Naive thymus-derived CD4-positive, alpha-beta T cell (primary cell): ENCODE measurements at regions of chr12 and their contacts with region 1.

Region 1: GRCh38 chr12:7188562-7189397 is 706 bp upstream of the PEX5 start:
- DNase-seq: peak; percentile 34 to 64 (median 58)
- ATAC-seq: peak; percentile 40
- H3K4me3 ChIP-seq: peak overlapping the region; percentile 89
- H3K4me3 Mint-ChIP-seq: peak overlapping the region; percentile 92 to 99 (median 97)
- H3K27ac ChIP-seq: peak overlapping the region; percentile 92
- H3K27ac Mint-ChIP-seq: peak overlapping the region; percentile 93 to 99 (median 98)
- H3K4me1 ChIP-seq: peaks cover 10 to 28% of the 10 kb centered on the region in 2 donors
- H3K4me1 Mint-ChIP-seq: peaks cover 18 to 48% (median 40%) of the 10 kb centered on the region in 7 donors
- H3K27me3 ChIP-seq: no peaks in the 10 kb centered on the region
- H3K27me3 Mint-ChIP-seq: no peaks in the 10 kb centered on the region

Region 2: GRCh38 chr12:6904280-6905278 is 284.2 kb before region 1 on chr12 and contains the start of gene LRRC23:
- CTCF ChIA-PET with region 1: no interaction called
- POLR2A ChIA-PET with region 1: no interaction called
- intact Hi-C with region 1: loop called in 1 of 2 experiments (anchors 1 kb)
- DNase-seq: peak; percentile 89 to 98 (median 95)
- ATAC-seq: peak; percentile 98
- H3K4me3 ChIP-seq: peak within 1 kb of the TSS; percentile 75
- H3K4me3 Mint-ChIP-seq: peak within 1 kb of the TSS in 1 of 10 donors; percentile 8
- H3K27ac ChIP-seq: peak within 1 kb of the TSS; percentile 93
- H3K27ac Mint-ChIP-seq: peak within 1 kb of the TSS in 1 of 9 donors; percentile 78
- H3K4me1 ChIP-seq: peaks cover 14 to 17% of the 10 kb centered on the region in 2 donors
- H3K4me1 Mint-ChIP-seq: peaks cover 0 to 10% (median 3%) of the 10 kb centered on the region in 7 donors
- H3K27me3 ChIP-seq: no peaks in the 10 kb centered on the region
- H3K27me3 Mint-ChIP-seq: no peaks in the 10 kb centered on the region
- total RNA-seq, gene LRRC23: 6.6 to 12.1 (median 7.3) TPM

Region 3: GRCh38 chr12:7018350-7019042 is 170.3 kb before region 1 on chr12 and contains the start of gene LPCAT3:
- CTCF ChIA-PET with region 1: no interaction called
- POLR2A ChIA-PET with region 1: no interaction called
- intact Hi-C with region 1: loop called (anchors 1 kb)
- DNase-seq: peak; percentile 93 to 99 (median 98)
- ATAC-seq: peak; percentile 97
- H3K4me3 ChIP-seq: peak within 1 kb of the TSS; percentile 95
- H3K4me3 Mint-ChIP-seq: peak within 1 kb of the TSS; percentile 84 to 100 (median 94)
- H3K27ac ChIP-seq: peak within 1 kb of the TSS; percentile 89
- H3K27ac Mint-ChIP-seq: peak within 1 kb of the TSS; percentile 75 to 96 (median 93)
- H3K4me1 ChIP-seq: peaks cover 11 to 12% of the 10 kb centered on the region in 2 donors
- H3K4me1 Mint-ChIP-seq: peaks cover 25 to 46% (median 41%) of the 10 kb centered on the region in 7 donors
- H3K27me3 ChIP-seq: no peaks in the 10 kb centered on the region
- H3K27me3 Mint-ChIP-seq: no peaks in the 10 kb centered on the region
- total RNA-seq, gene LPCAT3: 16.7 to 37.9 (median 27.1) TPM

Region 4: DNA sequence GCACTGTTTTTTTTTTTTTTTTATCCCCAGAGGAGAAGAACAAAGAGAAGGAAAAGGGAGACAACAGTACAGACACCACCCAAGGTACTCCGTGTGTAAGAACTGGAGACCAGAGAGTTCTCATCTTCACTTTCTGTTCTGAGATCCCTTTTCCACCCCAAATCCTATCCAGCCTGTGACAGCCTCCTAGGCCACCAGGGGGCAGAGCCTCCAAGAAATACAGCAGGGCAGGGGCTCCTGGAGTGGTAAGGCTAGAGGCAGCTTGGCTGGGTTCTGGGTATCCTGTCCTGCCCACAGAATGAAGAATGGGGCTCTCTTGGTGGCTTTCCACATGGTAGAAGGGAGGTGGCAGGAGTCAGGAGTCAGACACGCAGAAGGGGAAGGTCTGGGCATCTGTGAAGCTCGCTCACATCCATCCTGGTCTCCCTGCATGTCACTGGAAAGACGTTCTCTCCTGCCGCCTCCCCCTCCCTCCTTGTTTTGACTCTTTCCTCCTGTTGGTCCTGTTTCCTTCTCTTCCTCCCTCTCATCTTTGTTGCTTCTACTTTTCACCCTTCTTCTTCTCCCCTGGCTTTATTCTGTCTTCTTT is 46.6 kb before region 1 on chr12:
- CTCF ChIA-PET with region 1: interaction called, 5 read pairs
- POLR2A ChIA-PET with region 1: interaction called, 3 read pairs
- intact Hi-C with region 1: loop called (anchors 1 kb)
- DNase-seq: peak in 8 of 9 donors; percentile 33 to 60 (median 56)
- ATAC-seq: peak; percentile 83
- H3K4me3 ChIP-seq: no peak overlapping the region
- H3K4me3 Mint-ChIP-seq: no peak overlapping the region
- H3K27ac ChIP-seq: no peak overlapping the region
- H3K27ac Mint-ChIP-seq: no peak overlapping the region
- H3K4me1 ChIP-seq: peaks cover 0 to 3% of the 10 kb centered on the region in 2 donors
- H3K4me1 Mint-ChIP-seq: peaks cover 0 to 19% (median 5%) of the 10 kb centered on the region in 7 donors
- H3K27me3 ChIP-seq: no peaks in the 10 kb centered on the region
- H3K27me3 Mint-ChIP-seq: no peaks in the 10 kb centered on the region

Region 5: GRCh38 chr12:7933255-7933729 is 744.5 kb after region 1 on chr12:
- CTCF ChIA-PET with region 1: no interaction called
- POLR2A ChIA-PET with region 1: interaction called, 3 read pairs
- intact Hi-C with region 1: loop called in 1 of 2 experiments (anchors 1 kb)
- DNase-seq: peak; percentile 33 to 87 (median 83)
- ATAC-seq: peak; percentile 85
- H3K4me3 ChIP-seq: peak overlapping the region; percentile 98
- H3K4me3 Mint-ChIP-seq: no peak overlapping the region
- H3K27ac ChIP-seq: peak overlapping the region; percentile 84
- H3K27ac Mint-ChIP-seq: no peak overlapping the region
- H3K4me1 ChIP-seq: peaks cover 18 to 33% of the 10 kb centered on the region in 2 donors
- H3K4me1 Mint-ChIP-seq: peaks cover 25 to 37% (median 34%) of the 10 kb centered on the region in 7 donors
- H3K27me3 ChIP-seq: no peaks in the 10 kb centered on the region
- H3K27me3 Mint-ChIP-seq: no peaks in the 10 kb centered on the region

Region 6: DNA sequence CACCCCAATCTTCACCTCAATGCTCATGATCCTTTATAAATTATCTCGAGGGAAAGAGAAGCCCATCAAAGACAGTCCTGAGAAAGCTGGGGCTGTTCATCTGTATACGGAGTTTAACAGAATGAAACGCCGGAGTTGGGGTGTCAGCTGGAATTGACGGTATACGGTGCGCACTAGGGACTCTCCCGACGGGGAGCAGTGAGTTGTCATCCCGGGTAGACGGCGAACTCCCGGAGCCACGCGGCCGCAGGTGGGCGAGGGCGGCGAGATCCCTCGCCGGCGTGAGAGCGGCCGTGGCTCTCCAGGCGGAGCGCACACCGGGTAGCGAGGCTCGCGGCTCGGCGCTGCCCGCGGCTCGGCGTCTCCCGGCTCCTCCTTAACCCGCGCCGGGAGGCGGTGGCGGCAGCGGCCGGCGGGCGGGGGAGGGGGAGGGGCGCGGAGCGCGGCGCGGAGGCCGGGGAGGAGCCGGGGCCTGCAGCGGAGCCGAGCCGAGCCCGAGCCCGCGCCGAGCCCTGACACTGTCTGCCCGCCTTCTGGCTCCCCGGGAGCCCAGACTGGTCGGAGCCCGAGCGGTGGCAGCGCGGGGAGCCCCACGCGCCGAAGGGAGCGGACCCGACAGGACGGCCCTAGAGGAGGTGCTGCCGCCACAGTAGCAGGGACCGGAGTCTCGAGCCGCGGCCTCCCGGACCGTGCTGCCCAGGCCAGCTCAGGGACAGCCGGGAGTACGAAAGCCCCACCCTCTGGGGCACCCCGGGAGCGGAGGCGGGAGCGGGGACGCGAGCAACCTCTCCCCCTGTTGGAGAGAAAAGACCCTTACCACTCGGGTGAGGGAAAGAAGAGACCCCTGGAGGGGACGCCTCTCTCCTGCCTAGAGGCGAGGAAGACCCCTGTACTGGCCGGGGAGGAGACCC is 843.7 kb after region 1 on chr12 and contains the start of gene FOXJ2:
- CTCF ChIA-PET with region 1: no interaction called
- POLR2A ChIA-PET with region 1: no interaction called
- intact Hi-C with region 1: loop called (anchors 2 kb)
- DNase-seq: peak; percentile 68 to 83 (median 78)
- ATAC-seq: peak; percentile 94
- H3K4me3 ChIP-seq: peak within 1 kb of the TSS; percentile 88
- H3K4me3 Mint-ChIP-seq: peak within 1 kb of the TSS; percentile 71 to 94 (median 91)
- H3K27ac ChIP-seq: peak within 1 kb of the TSS; percentile 100
- H3K27ac Mint-ChIP-seq: peak within 1 kb of the TSS; percentile 77 to 98 (median 94)
- H3K4me1 ChIP-seq: peaks cover 41 to 43% of the 10 kb centered on the region in 2 donors
- H3K4me1 Mint-ChIP-seq: peaks cover 49 to 63% (median 51%) of the 10 kb centered on the region in 7 donors
- H3K27me3 ChIP-seq: no peaks in the 10 kb centered on the region
- H3K27me3 Mint-ChIP-seq: peaks cover 0 to 2% (median 0%) of the 10 kb centered on the region in 5 donors
- total RNA-seq, gene FOXJ2: 19.8 to 30.2 (median 28.9) TPM